MCF 10A (cell line): ENCODE measurements at regions of chr6 and their contacts with region 1.

Region 1: DNA sequence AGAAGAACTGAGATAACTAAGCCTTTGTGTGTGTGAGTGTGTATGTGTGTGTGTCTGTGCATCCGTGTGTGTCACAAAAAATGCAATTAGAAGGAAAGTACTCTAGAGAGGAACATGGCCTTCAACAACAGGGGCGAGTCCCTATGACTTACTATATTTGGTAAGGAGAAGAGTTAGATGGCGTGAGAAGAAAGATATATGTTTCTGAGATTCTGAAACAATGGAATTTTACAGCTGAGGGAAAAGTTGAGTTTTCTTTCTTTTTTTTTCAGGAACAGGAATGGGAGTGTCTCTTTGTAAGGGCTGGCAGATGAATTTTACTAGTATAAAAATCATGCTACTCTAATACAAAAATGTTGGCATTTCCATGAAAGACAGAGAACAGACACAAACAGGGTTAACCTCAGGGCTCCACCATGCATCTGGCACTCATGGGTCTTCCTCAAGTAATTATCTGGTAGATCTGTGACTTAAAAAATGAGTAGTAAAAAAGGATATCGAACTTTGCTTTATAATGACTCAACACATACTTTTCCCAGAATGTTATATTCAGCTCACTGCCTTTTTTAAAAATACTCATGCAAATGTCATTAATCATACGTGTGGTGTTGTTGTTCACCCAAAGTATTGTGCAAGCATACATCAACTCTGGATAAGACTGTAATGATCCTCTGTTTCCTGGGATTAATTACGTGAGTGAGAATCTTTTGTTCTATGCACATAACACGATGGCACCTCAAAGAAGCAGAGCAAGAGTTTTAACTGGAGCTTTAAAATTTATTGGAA is 12.8 kb upstream of the SASH1 start:
- DNase-seq: peak; percentile 63
- H3K4me3 Mint-ChIP-seq: no peak overlapping the region
- H3K27ac Mint-ChIP-seq: peak overlapping the region; percentile 16
- H3K4me1 Mint-ChIP-seq: peaks cover 11% of the 10 kb centered on the region
- H3K27me3 Mint-ChIP-seq: no peaks in the 10 kb centered on the region
- CTCF ChIP-seq: no peak

Region 2: GRCh38 chr6:148367411-148368024 is 37.7 kb after region 1 on chr6:
- CTCF ChIA-PET with region 1: no interaction called
- POLR2A ChIA-PET with region 1: no interaction called
- intact Hi-C with region 1: loop called (anchors 5 kb)
- DNase-seq: peak; percentile 51
- H3K4me3 Mint-ChIP-seq: no peak overlapping the region
- H3K27ac Mint-ChIP-seq: no peak overlapping the region
- H3K4me1 Mint-ChIP-seq: peaks cover 28% of the 10 kb centered on the region
- H3K27me3 Mint-ChIP-seq: no peaks in the 10 kb centered on the region
- CTCF ChIP-seq: no peak